Activated CD4-positive, alpha-beta T cell treated with anti-CD3 and anti-CD28 coated beads for 36 hours (primary cell): ENCODE measurements at regions of chr9 and their contacts with region 1.

Region 1: DNA sequence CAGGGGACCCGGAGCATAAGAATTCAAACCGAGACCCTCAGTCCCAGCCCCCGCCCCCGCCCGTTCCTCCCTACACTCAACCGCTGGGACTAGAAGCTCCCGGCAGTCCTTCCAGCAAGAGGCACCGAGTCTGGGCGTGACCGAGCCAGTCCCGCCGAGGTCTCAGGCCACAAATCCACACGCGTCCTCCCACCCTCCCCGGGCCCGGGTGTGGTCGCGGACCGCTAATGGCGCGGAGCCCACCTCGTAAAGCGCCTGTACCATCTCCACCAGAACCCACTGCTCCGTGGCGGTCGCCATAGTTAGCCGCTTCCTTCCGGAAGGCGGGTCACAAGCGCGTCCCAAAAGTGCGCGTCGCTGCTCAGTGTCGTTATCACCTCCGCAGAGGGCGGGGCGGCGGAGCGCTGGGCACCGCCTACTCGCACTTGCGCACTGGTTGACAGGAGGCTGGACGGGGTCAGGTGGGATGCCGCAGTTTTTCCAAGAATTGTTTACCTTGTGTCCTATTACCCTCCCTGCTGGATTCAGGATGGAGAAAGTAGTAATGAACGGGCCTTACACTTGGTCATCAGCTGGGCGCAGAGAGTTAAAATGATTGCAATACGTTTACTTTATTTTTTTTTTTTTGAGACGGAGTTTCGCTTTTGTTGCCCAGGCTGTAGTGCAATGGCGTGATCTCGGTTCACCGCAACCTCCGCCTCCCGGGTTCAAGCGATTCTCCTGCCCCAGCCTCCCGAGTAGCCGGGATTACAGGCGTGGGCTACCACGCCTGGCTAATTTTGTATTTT is at the start of gene SPTLC1:
- DNase-seq: peak; percentile 97
- ATAC-seq: peak; percentile 99
- H3K4me3 Mint-ChIP-seq: peak within 1 kb of the TSS; percentile 95
- H3K27ac Mint-ChIP-seq: peak within 1 kb of the TSS; percentile 98
- H3K4me1 Mint-ChIP-seq: peaks cover 26% of the 10 kb centered on the region
- H3K27me3 Mint-ChIP-seq: no peaks in the 10 kb centered on the region
- total RNA-seq, gene SPTLC1: 45.9 to 46.6 TPM

Region 2: GRCh38 chr9:91795598-91796241 is 319.5 kb before region 1 on chr9:
- CTCF ChIA-PET with region 1: no interaction called
- POLR2A ChIA-PET with region 1: no interaction called
- intact Hi-C with region 1: loop called in 1 of 2 experiments (anchors 5 kb)
- DNase-seq: peak; percentile 10
- ATAC-seq: no peak
- H3K4me3 Mint-ChIP-seq: no peak overlapping the region
- H3K27ac Mint-ChIP-seq: no peak overlapping the region
- H3K4me1 Mint-ChIP-seq: peaks cover 12% of the 10 kb centered on the region
- H3K27me3 Mint-ChIP-seq: peaks cover 2% of the 10 kb centered on the region

Region 3: DNA sequence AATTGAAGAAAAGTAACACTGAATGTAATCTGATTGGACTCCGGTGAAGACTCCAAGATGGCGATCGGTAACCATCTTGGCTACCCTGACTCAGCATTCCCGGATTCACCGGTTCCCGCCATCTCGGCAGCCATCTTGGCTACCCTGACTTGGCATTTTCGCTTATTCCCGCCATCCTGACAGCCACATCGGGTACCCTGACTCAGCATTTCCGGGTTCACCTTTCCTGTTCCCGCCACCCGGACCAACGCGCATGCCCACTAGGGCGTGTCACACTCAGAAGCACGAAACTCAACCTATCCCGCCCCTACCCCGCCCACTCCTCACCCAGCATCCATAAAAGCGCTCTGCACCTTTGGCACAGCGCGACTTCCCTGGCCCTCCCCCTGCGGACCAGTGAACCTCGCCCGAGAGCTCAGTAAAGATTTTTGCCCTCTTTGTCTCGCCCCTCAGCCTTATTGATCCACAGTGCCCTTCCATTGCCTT is 17.2 kb before region 1 on chr9:
- CTCF ChIA-PET with region 1: interaction called, 4 read pairs
- POLR2A ChIA-PET with region 1: no interaction called
- intact Hi-C with region 1: loop called in 1 of 2 experiments (anchors 1 kb)
- DNase-seq: peak; percentile 91
- ATAC-seq: peak; percentile 38
- H3K4me3 Mint-ChIP-seq: peak overlapping the region; percentile 47
- H3K27ac Mint-ChIP-seq: peak overlapping the region; percentile 89
- H3K4me1 Mint-ChIP-seq: peaks cover 51% of the 10 kb centered on the region
- H3K27me3 Mint-ChIP-seq: no peaks in the 10 kb centered on the region

Region 4: DNA sequence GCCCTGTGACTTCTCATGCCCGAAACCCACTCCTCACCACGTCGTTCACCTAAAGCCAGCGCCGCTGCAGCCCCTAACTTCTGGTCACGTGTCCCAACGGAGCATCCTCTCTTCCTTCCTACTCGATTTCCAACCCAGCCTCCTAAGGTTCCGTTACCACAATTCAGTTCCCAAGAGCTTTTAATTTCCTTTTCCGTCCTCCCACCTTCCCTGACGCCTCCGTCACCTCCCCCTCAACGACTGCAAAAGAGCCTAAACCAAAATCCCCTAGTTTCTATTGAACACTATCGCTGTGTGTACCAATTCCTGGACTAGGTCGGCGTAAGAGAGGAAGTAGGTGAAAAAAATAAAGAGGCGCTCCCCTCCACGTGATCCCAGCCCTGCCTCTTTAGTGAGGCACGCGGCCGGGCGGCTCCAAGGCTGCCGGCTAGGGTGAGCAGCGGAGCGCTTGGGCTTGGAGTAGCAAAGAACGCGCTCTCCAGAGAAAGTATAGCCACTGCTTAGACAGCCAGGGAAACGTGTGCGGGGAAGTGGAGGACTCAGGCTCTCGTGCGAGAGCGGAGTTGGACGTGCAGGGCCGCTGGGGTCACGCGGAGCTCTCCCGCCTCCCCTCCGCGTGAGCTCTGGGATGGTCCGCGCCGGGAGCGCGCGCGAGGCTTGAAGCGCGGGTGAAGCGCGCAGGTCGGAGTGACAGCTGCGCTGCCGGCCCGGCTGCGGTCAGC is 210.2 kb after region 1 on chr9 and contains the starts of genes CENPP and NOL8:
- CTCF ChIA-PET with region 1: interaction called, 4 read pairs
- POLR2A ChIA-PET with region 1: interaction called, 3 read pairs
- intact Hi-C with region 1: loop called in 1 of 2 experiments (anchors 1 kb)
- DNase-seq: peak; percentile 90
- ATAC-seq: peak; percentile 95
- H3K4me3 Mint-ChIP-seq: peak within 1 kb of the TSS; percentile 89
- H3K27ac Mint-ChIP-seq: peak within 1 kb of the TSS; percentile 97
- H3K4me1 Mint-ChIP-seq: peaks cover 37% of the 10 kb centered on the region
- H3K27me3 Mint-ChIP-seq: no peaks in the 10 kb centered on the region
- total RNA-seq, gene CENPP: 22.8 to 32.3 TPM
- total RNA-seq, gene NOL8: 57.7 to 80.2 TPM

Region 5: GRCh38 chr9:92669890-92670708 is 554.8 kb after region 1 on chr9 and contains the start of gene IPPK:
- CTCF ChIA-PET with region 1: no interaction called
- POLR2A ChIA-PET with region 1: no interaction called
- intact Hi-C with region 1: loop called in 1 of 2 experiments (anchors 1 kb)
- DNase-seq: peak; percentile 99
- ATAC-seq: peak; percentile 94
- H3K4me3 Mint-ChIP-seq: peak within 1 kb of the TSS; percentile 96
- H3K27ac Mint-ChIP-seq: peak within 1 kb of the TSS; percentile 93
- H3K4me1 Mint-ChIP-seq: peaks cover 33% of the 10 kb centered on the region
- H3K27me3 Mint-ChIP-seq: no peaks in the 10 kb centered on the region
- total RNA-seq, gene IPPK: 9.9 to 12.2 TPM

Region 6: DNA sequence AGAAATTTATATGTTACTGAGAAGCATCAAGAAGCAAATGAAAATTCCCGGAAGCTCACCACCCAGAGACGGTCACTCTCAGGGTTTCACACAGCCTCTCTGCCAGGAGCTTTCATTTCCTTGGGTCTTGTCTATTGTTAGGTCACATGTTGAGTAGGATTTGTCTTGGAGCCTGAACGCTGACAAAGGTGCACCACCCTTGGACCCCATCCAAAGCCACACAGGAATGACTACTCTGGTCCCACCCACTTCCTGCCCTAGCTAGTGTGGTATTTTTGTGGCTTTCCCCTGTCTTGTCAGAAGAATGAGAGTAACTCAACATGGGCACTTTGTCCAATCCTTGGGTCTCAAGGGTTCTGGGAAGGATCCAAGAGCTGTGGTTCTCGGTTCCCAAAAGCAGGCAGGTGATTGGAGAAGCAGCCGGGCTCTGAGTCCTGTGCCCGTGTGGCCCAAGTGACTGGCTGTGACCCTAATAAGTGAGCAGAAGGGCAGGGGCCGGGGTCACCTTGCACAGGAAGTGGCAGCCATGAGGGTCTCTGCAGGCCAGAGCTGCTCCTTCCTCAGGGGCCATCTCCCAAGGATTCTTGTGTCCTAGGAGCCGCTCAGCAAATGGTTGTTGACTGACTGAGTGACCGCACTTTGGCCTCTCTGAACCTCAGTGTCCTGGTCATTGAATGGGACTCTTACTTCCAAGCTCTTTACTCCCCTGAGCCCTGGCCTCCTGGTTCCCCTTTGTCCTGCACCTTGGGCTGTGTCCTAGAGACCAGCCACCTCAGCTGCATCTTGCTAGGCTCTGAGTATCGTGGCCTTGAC is 839.0 kb after region 1 on chr9:
- CTCF ChIA-PET with region 1: no interaction called
- POLR2A ChIA-PET with region 1: no interaction called
- intact Hi-C with region 1: loop called in 1 of 2 experiments (anchors 10 kb)
- DNase-seq: peak; percentile 89
- ATAC-seq: peak; percentile 85
- H3K4me3 Mint-ChIP-seq: peak overlapping the region; percentile 66
- H3K27ac Mint-ChIP-seq: peak overlapping the region; percentile 97
- H3K4me1 Mint-ChIP-seq: peaks cover 78% of the 10 kb centered on the region
- H3K27me3 Mint-ChIP-seq: no peaks in the 10 kb centered on the region

Region 7: GRCh38 chr9:93575796-93576257 is 1460.6 kb after region 1 on chr9:
- CTCF ChIA-PET with region 1: no interaction called
- POLR2A ChIA-PET with region 1: no interaction called
- intact Hi-C with region 1: loop called in 1 of 2 experiments (anchors 5 kb)
- DNase-seq: peak; percentile 64
- ATAC-seq: peak; percentile 39
- H3K4me3 Mint-ChIP-seq: peak overlapping the region; percentile 78
- H3K27ac Mint-ChIP-seq: peak overlapping the region; percentile 91
- H3K4me1 Mint-ChIP-seq: peaks cover 32% of the 10 kb centered on the region
- H3K27me3 Mint-ChIP-seq: no peaks in the 10 kb centered on the region